OCI-LY7 (cell line): ENCODE measurements at regions of chr20 and their contacts with region 1.

Region 1: GRCh38 chr20:8131598-8132483 is at the start of gene PLCB1:
- DNase-seq: peak; percentile 91
- H3K4me3 ChIP-seq: peak within 1 kb of the TSS; percentile 76
- H3K27ac ChIP-seq: peak within 1 kb of the TSS; percentile 45
- H3K4me1 ChIP-seq: peaks cover 29% of the 10 kb centered on the region
- CTCF ChIP-seq: peak; percentile 78
- total RNA-seq, gene PLCB1: 25.0 and 30.5 TPM in 2 replicates

Region 2: GRCh38 chr20:8094415-8094818 is 37.4 kb before region 1 on chr20:
- CTCF ChIA-PET with region 1: no interaction called
- POLR2A ChIA-PET with region 1: no interaction called
- intact Hi-C with region 1: no loop called
- DNase-seq: no peak
- H3K4me3 ChIP-seq: no peak overlapping the region
- H3K27ac ChIP-seq: no peak overlapping the region
- H3K4me1 ChIP-seq: no peaks in the 10 kb centered on the region
- CTCF ChIP-seq: no peak

Region 3: DNA sequence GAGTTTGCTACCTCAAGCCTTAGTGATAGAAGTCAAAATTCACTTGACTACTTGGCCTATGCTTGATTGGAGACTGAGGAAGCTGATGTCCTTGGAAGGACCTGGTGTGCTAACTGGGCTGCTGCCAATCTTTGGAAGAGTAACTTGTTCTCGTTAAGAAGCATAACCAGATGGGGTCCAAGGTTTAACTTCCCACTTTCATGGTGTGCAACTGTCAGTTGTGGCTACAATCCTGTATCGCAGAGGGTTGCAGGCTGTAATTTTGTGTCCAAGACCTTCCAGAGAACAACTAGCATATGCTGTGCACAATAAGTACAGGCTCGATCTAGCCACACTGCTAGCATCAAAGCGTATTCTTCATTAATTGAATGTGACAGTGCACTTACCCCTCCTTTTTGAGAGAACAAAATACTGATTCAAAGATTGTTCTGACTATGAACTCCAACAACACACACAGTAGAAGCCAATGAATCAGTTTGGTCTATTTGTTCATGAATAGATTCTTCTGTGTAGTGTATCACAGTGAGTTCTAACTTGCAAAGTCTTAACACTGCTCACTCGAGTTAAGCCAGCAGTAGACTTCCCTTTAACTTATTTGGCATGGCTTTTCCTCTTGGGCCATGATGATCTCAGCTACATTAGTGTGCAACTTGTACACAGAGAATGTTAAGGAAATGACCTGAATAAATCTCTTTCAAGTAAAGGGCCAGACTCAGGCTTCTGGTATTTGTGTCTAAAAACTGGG is 15.6 kb before region 1 on chr20:
- CTCF ChIA-PET with region 1: no interaction called
- POLR2A ChIA-PET with region 1: no interaction called
- intact Hi-C with region 1: no loop called
- DNase-seq: no peak
- H3K4me3 ChIP-seq: no peak overlapping the region
- H3K27ac ChIP-seq: no peak overlapping the region
- H3K4me1 ChIP-seq: no peaks in the 10 kb centered on the region
- CTCF ChIP-seq: no peak

Region 4: DNA sequence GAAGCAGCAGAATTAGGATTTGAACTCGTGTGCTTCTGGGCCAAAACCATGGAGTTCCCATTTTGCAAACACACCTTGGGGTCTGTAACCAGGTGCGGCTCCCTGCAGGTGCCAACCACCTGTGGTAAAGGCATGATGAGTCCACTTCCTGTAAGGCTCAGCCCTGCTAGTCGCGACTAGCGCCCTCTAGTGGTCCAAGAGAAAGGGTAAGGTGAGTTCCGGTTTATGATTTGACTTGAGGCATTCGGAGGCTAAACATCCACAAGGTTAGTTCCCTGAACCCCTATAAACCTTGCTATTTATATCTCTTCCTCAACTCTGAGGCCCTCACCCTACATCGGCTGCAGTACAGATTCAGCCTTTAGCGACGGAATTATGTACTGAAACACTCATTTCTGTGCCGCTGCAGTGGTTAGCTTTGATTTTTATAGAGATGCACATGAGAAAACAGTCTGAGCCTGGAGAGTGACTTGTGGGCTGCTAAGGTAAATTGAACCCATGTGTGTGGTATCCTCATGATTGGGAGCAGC is 173.7 kb after region 1 on chr20:
- CTCF ChIA-PET with region 1: no interaction called
- POLR2A ChIA-PET with region 1: no interaction called
- intact Hi-C with region 1: loop called (anchors 5 kb)
- DNase-seq: peak; percentile 86
- H3K4me3 ChIP-seq: no peak overlapping the region
- H3K27ac ChIP-seq: no peak overlapping the region
- H3K4me1 ChIP-seq: peaks cover 7% of the 10 kb centered on the region
- CTCF ChIP-seq: peak; percentile 93

Region 5: DNA sequence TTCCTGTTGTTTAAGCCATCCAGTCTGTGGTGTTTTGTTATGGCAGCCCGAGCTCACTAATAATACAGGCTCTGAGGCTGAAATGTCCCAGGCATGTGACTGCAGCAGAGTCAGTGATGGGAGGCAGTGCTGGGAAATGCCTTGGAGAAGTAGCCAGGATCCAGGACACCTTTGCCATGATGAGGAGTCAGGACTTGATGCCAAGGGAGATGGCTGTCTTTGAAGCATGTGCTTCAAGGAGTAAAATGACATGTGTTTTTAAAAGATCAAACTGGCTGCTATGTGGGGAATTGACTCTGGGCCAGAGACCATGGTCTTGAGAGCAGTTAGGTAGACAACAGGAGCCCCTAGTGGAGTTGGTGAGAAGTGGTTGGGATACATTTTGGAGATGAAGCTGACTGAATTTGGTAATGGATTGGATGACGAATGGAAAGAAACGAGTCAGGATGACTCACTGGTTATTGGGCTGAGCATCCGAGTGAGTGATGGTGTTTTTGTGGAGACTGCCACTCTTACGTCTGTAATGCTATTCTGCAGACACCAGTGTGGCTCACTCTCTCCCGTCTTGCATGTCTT is 322.4 kb after region 1 on chr20:
- CTCF ChIA-PET with region 1: no interaction called
- POLR2A ChIA-PET with region 1: no interaction called
- intact Hi-C with region 1: loop called (anchors 1 kb)
- DNase-seq: peak; percentile 53
- H3K4me3 ChIP-seq: no peak overlapping the region
- H3K27ac ChIP-seq: no peak overlapping the region
- H3K4me1 ChIP-seq: peaks cover 6% of the 10 kb centered on the region
- CTCF ChIP-seq: peak; percentile 71

Region 6: DNA sequence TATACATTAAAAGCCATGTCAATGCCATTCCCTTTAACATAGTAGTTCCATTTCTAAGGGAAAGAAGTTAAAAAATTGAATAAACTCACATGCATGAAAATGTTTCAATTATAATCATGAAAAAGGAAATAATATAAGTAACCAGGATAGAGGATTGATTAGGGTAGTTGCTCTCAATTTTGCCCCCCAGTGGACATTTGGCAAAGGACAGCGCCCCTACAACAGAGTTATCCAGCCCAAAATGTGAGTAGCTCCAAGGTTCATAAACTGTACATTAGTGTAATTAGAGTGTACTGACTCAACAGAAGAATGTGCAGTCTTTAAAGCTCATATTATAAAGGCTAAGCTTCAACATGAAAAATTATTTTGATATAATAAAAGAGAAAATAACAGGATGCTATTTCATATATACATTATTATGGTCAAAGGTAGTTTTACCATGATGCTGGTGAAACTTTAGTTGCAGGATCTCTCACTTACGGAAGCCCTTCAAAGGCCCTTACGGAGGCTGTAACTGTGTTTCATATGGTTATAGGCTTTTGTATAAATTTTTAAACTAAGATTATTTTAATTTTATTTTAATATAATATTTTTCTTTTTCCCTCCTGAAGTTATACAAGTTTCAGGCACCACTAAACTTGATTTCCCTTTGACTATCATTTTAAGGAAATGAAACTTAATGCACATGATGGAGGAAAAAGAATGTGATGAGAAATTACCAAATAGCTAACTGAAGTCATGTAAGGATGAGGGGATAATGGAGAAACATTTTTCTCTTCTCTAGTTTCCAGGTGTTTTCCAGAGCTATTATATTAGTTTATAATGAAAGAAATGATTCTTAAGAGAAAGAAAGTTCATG is 403.8 kb after region 1 on chr20:
- CTCF ChIA-PET with region 1: no interaction called
- POLR2A ChIA-PET with region 1: no interaction called
- intact Hi-C with region 1: loop called (anchors 5 kb)
- DNase-seq: peak; percentile 69
- H3K4me3 ChIP-seq: peak overlapping the region; percentile 72
- H3K27ac ChIP-seq: peak overlapping the region; percentile 93
- H3K4me1 ChIP-seq: peaks cover 89% of the 10 kb centered on the region
- CTCF ChIP-seq: peak; percentile 95